ENCODE measurements at regions of chr19 and their contacts with region 1.

Region 1: DNA sequence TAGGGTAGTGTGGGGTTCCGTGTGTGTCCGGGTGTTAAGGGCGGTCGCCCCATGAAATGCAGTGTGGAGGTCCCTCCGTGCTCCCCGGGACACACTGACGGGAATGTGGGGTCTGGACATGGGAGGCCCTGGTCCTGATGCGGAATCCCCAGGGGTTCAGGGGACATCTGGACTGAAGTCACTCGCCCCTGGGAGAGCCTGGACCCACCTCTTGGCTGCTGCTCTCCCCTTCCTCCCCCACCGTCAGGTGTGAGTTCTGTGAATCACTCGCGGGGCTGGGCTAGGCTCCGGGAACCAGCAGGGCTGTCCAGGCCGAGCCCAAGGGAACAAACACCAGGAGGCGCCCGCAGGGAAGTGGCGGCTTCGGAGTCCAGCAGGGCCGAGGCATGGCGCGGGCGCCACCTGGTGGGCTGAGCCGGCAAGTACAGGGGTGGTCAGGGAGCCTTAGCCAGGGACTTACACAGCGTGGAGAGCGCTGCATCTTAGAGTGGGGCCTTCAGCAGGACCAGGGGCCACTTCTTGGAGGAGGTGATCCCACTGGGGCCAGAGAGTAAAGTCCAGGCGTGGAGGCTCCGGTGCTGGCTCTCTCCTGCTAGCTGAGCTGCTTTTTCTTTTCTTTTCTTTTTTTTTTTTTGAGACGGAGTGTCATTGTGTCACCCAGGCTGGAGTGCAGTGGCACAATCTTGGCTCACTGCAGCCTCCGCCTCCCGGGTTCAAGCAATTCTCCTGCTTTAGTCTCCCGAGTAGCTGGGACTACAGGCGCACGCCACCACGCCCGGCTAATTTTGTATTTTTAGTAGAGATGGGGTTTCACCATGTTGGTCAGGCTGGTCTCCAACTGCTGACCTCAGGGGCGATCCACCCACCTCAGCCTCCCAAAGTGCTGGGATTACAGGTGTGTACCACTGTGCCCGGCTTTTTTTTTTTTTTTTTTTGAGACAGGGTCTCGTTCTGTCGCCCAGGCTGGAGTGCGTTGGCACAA is 20.1 kb downstream of the WTIP start:
- DNase-seq: peak; percentile 79 to 89
- ATAC-seq: peak; percentile 95
- H3K4me3 ChIP-seq: no peak overlapping the region
- H3K27ac ChIP-seq: peak overlapping the region; percentile 51 to 69 (median 56)
- H3K4me1 ChIP-seq: peaks cover 3 to 9% of the 10 kb centered on the region in 2 donors
- H3K27me3 ChIP-seq: no peaks in the 10 kb centered on the region
- CTCF ChIP-seq: peak; percentile 96 to 100 (median 99)
- POLR2A ChIP-seq: no peak

Region 2: DNA sequence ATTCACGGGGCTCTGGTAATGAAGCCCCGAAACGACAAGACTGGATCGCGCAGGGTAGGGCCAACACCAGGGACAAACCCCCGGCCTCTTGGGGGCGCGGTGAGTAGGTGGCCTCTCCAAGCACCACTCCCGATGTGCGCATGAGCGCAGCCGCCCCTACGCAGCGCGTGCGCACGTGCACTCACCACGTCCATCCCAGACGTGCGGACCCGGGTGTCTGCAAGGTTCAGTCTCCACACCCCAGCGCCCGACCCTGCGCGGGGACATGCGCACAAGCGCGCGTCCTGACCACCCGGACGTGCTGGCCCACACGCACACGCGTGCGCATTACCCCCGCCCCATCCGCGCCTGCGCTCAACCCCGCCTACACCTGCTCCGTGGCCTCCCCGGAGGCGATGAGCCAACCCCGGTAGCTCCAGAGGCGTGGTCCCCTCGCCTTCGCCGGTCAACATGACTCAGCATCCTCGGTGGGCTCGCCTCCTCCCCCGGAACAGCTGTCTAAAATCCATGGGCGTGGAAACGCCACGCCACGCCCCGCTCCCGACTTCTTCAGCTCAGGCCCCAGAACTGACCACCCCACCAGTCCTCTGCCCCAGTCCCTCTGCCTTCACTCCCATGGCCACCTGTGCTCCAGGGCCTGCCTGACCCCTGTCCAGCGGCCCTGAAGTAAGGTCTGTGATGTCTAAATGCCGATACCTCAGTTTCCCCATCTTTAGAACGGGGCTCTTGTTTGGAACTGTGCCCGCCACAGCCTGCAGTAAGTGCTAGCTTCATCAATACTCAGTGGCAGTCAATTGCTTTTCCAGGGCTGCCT is 142.3 kb before region 1 on chr19:
- in situ Hi-C with region 1: no loop called
- intact Hi-C with region 1: loop called (anchors 2 kb)
- DNase-seq: peak; percentile 92 to 98
- ATAC-seq: peak; percentile 82 to 89
- H3K4me3 ChIP-seq: peak overlapping the region; percentile 46 to 56 (median 54)
- H3K27ac ChIP-seq: peak overlapping the region; percentile 87 to 91 (median 89)
- H3K4me1 ChIP-seq: peaks cover 7 to 11% of the 10 kb centered on the region in 2 donors
- H3K27me3 ChIP-seq: no peaks in the 10 kb centered on the region
- CTCF ChIP-seq: peak in 4 of 5 experiments; percentile 40 to 74 (median 64)
- POLR2A ChIP-seq: peak; percentile 45 to 57

Region 3: GRCh38 chr19:34404109-34404897 is 97.3 kb before region 1 on chr19 and contains the start of gene PDCD2L:
- in situ Hi-C with region 1: no loop called
- intact Hi-C with region 1: loop called (anchors 2 kb)
- DNase-seq: peak; percentile 86 to 92
- ATAC-seq: peak; percentile 96 to 98
- H3K4me3 ChIP-seq: peak within 1 kb of the TSS; percentile 80 to 95 (median 86)
- H3K27ac ChIP-seq: peak within 1 kb of the TSS; percentile 81 to 86 (median 86)
- H3K4me1 ChIP-seq: peaks cover 0 to 4% of the 10 kb centered on the region in 2 donors
- H3K27me3 ChIP-seq: no peaks in the 10 kb centered on the region
- CTCF ChIP-seq: no peak
- POLR2A ChIP-seq: peak; percentile 59 to 73
- total RNA-seq, gene PDCD2L: 18.1 to 49.8 (median 25.1) TPM

Region 4: DNA sequence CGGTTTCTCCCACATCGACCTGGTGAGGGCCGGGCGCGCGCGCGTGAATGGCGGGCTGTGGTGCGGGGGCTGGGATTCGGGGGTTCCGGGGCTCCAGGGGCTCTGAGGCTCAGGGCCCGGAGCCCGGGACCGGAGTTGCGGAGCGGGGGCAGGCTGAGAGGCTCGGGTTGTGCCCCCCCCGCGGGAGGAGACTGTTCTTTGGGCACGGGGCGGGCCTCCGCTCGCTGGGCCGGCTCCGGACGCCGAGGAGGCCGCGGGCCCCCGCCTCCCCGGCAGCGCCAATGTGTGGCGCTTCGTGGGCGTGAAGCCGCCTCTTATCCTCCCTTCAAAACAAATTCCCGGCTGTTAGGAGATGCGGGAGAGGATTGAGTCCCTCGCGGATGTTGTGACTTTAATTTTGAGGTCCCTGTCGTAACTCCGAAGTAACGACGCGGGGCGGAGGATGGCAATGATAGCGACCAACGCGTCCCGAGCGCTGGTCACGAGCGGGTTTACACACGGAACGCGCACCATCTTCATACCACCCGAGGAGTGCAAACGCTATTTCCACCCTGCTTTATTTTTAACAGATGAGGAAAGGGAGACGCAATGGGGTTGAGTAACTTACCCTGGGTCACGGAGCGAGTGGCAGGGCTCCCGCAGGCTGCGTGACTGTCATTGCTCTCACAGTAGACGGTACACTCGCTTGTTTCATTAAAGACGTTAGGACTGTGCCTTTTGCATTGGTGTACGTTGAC is 72.9 kb before region 1 on chr19:
- in situ Hi-C with region 1: no loop called
- intact Hi-C with region 1: loop called (anchors 1 kb)
- DNase-seq: peak; percentile 69 to 85
- ATAC-seq: peak; percentile 88 to 90
- H3K4me3 ChIP-seq: peak overlapping the region; percentile 84 to 98 (median 91)
- H3K27ac ChIP-seq: peak overlapping the region; percentile 97 to 98 (median 98)
- H3K4me1 ChIP-seq: peaks cover 44 to 47% of the 10 kb centered on the region in 2 donors
- H3K27me3 ChIP-seq: no peaks in the 10 kb centered on the region
- CTCF ChIP-seq: no peak
- POLR2A ChIP-seq: peak; percentile 71 to 75

Region 5: GRCh38 chr19:34468409-34468808 is 33.2 kb before region 1 on chr19:
- in situ Hi-C with region 1: no loop called
- intact Hi-C with region 1: loop called (anchors 5 kb)
- DNase-seq: no peak
- ATAC-seq: no peak
- H3K4me3 ChIP-seq: no peak overlapping the region
- H3K27ac ChIP-seq: peak overlapping the region in 2 of 4 donors; percentile 18 to 31
- H3K4me1 ChIP-seq: peaks cover 0 to 6% of the 10 kb centered on the region in 2 donors
- H3K27me3 ChIP-seq: no peaks in the 10 kb centered on the region
- CTCF ChIP-seq: no peak
- POLR2A ChIP-seq: no peak

Region 6: DNA sequence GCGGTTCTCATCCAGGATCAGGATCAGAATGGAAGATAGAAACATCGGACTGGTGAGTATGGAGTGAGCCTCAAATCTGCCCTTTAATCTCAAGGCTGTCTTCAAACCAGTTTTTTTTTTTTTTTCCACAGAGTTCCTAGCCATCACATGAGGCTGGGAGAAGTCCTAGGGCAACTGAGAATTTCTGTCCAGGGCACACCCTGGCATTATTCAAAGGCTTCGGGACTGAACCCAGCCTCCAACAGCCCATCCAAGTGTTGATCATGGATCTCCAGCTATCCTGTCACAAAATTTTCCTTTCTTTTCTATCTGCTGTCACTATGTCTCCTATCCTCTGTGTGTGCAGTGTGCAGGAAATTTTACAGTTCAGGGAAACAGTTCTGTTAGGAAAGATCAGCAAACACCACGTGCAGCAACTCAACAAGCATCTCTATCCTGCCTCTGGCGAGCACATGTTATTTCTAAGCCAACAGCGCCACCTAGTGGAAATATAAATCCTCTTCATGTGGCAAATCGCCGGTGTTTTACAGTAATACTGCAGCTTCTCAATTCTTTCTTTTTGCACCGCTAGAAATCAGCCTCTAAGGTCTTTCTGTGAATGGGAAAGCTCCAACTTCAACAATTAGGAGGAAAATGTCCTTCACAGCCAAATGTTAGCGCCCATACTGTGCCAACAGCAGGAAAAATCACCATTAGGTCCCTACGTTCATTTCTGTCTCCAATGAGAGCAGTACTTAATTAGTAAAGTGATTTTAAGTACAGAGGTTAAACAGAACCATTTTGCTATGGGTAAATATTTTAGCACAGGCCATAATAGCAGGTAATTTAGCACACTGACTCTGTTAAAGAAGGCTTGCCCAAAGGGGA is 211.0 kb after region 1 on chr19:
- in situ Hi-C with region 1: loop called in 3 of 4 experiments (anchors 10 to 25 kb)
- intact Hi-C with region 1: loop called (anchors 1 kb)
- DNase-seq: peak; percentile 33 to 50
- ATAC-seq: peak; percentile 80 to 89
- H3K4me3 ChIP-seq: no peak overlapping the region
- H3K27ac ChIP-seq: no peak overlapping the region
- H3K4me1 ChIP-seq: no peaks in the 10 kb centered on the region
- H3K27me3 ChIP-seq: no peaks in the 10 kb centered on the region
- CTCF ChIP-seq: peak; percentile 79 to 88 (median 86)
- POLR2A ChIP-seq: no peak